Heart left ventricle (tissue), 16 donors: ENCODE measurements at regions of chr4 and their contacts with region 1.

Region 1: GRCh38 chr4:30860983-30861382 is 140.8 kb downstream of the PCDH7 start:
- DNase-seq: no peak
- ATAC-seq: no peak
- H3K4me3 ChIP-seq: no peak overlapping the region
- H3K27ac ChIP-seq: no peak overlapping the region
- H3K4me1 ChIP-seq: peaks cover 0 to 26% (median 0%) of the 10 kb centered on the region in 12 donors
- H3K27me3 ChIP-seq: no peaks in the 10 kb centered on the region
- CTCF ChIP-seq: no peak
- POLR2A ChIP-seq: no peak

Region 2: DNA sequence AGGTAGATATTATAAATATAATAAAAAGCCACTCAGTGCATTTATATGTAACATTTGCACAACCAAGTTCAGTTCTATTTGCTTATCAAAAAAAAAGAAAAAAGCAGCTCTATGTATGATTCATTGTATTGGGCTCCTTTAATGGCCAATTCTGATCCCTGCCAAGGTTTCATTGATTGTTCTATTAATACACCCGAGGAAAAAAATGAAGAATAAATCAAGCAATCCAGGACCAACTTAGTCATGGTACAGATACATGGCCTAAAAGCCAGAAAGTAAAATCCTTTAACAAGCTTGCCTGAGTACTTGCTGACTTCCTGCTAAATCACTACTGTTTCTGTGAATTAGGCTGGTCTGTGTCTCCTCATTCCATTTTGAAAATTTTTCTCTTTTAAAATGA is 218.4 kb before region 1 on chr4:
- intact Hi-C with region 1: no loop called
- DNase-seq: no peak
- ATAC-seq: no peak
- H3K4me3 ChIP-seq: no peak overlapping the region
- H3K27ac ChIP-seq: no peak overlapping the region
- H3K4me1 ChIP-seq: no peaks in the 10 kb centered on the region
- H3K27me3 ChIP-seq: no peaks in the 10 kb centered on the region
- CTCF ChIP-seq: no peak
- POLR2A ChIP-seq: no peak

Region 3: DNA sequence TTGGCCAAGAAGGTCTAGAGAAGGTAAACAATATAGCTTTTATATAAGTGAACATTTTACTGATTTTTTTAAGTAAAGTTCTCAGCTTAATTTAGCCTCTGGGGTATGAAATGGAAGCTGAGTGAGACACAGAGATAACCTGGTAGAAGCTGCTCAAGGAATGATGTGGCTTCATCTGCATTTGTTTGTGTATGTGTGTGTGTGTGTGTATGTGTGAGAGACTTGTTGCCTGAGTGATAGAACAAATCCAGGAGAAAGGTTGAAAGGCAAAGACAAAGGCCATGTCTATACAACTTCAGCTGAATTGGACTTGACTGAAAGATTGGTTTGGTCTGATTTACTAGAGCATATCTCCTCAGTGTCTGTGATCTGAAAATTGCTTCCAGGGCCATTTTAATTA is 77.2 kb before region 1 on chr4:
- intact Hi-C with region 1: loop called in 1 of 10 experiments (anchors 2 kb)
- DNase-seq: no peak
- ATAC-seq: no peak
- H3K4me3 ChIP-seq: no peak overlapping the region
- H3K27ac ChIP-seq: no peak overlapping the region
- H3K4me1 ChIP-seq: no peaks in the 10 kb centered on the region
- H3K27me3 ChIP-seq: no peaks in the 10 kb centered on the region
- CTCF ChIP-seq: no peak
- POLR2A ChIP-seq: no peak